ENCODE measurements at regions of chr19 and their contacts with region 1.

Region 1: GRCh38 chr19:44304659-44305193 is at the start of gene ZNF235:
- DNase-seq: peak; percentile 92
- ATAC-seq: peak; percentile 100
- total RNA-seq, gene ZNF235: 4.2 TPM

Region 2: DNA sequence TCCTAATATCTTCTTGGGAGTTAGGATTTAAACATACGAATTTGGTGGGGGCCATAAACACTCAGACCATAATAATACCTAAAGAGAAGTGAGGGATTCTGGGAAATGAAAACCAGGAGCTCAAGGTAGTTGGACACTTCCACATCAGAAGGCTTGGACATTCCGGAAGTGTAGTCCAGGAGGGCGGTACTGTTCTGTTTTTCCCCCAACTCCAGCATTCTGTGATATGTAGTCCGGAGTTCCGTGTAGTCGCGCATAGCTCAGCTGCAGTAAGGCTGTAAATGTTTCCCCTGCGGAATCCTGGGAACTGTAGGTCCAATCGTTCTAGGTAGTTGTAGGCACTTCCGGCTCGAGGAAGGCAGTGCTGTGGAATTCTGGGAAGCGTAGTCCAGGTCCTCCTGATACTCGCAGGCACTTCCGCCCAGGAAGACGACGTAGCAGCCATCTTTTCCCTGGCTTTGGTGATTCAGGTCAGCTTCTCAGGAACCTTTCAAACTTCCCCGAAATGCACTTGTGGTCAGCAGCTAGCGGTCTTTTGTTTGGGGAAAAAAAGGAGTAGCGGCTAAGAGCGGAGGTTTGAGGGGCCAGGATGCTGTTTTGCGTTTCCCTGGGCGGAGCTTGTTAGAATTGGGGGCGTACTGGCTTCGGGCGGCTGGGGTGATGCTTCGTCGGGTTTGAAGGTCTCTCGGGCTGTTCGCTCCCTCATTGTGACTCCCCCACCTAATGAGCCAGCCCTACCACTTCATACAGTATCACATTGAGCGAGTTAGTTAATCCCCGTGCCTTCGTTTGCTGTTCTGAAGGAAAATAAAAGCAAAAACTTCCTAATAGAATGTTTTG is 139.8 kb before region 1 on chr19 and contains the start of gene ZNF226:
- intact Hi-C with region 1: loop called (anchors 5 kb)
- DNase-seq: peak; percentile 89
- ATAC-seq: peak; percentile 99
- total RNA-seq, gene ZNF226: 15.7 TPM

Region 3: GRCh38 chr19:44212250-44212865 is 92.4 kb before region 1 on chr19 and contains the start of gene ZNF227:
- intact Hi-C with region 1: loop called (anchors 5 kb)
- DNase-seq: peak; percentile 95
- ATAC-seq: peak; percentile 98
- total RNA-seq, gene ZNF227: 13.1 TPM

Region 4: GRCh38 chr19:44356383-44357111 is 51.8 kb after region 1 on chr19 and contains the start of gene ZNF112:
- intact Hi-C with region 1: loop called (anchors 5 kb)
- DNase-seq: peak; percentile 84
- ATAC-seq: peak; percentile 100
- total RNA-seq, gene ZNF112: 3.9 TPM

Measured in Right ventricle myocardium inferior (tissue), 1 donor.